ENCODE measurements at regions of chr20 and their contacts with region 1.

Region 1: DNA sequence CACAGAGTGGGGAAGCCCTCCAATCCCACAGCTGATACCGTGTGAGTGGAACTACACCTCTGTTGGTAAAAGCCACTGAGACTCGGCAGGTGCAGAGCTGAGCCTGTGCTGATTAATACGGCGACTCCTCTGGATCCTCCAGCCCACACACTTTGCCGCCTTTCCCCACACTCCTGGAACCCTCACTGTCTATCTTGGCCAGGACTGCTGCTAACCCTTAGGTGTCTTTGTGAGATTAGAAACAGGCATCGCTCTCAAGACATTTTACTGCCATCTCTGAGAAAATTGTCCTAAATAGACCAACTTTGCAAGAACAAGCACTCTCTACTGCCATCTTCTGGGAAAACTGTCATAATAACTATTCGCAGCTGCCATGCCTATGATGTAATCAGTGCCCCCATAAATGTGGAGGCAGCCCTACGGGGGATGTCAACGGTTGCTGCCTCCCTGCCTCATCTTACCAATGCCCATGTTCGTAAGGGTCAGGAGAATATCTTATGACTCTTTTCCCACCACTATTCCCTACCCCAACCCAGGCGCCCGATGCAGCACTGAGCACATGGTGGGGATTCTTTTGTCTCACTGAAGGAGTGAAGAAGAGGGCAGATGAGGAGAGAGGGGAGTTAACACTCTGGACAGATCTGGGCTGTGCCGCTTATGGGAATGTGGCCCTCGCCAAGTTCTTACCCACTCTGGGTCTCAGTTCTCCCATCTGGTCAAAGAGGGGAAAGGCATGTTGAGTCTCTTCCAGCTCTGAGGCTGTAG is 26.1 kb upstream of the KCNB1 start:
- DNase-seq: no peak
- ATAC-seq: peak; percentile 58
- H3K4me3 Mint-ChIP-seq: no peak overlapping the region
- H3K27ac Mint-ChIP-seq: no peak overlapping the region
- H3K4me1 Mint-ChIP-seq: peaks cover 7% of the 10 kb centered on the region
- H3K27me3 Mint-ChIP-seq: peaks cover 46% of the 10 kb centered on the region

Region 2: DNA sequence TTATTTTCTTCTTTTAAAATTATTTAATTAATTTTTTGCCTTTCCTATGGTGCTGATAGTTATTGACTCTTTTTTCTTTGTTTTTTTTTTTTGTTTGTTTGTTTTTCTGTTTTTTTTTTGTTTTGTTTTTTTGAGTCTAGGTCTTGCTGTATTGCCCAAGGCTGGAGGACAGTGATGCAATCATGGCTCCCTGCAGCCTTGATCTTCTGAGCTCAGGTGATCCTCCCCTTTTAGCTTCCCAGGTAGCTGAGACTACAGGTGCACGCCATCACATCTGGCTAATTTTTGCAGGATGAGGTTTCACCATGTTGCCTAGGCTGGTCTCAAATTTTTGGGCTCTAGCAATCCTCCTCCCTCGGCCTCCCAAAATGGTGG is 177.4 kb before region 1 on chr20:
- CTCF ChIA-PET with region 1: interaction called, 17 read pairs
- DNase-seq: no peak
- ATAC-seq: no peak
- H3K4me3 Mint-ChIP-seq: no peak overlapping the region
- H3K27ac Mint-ChIP-seq: no peak overlapping the region
- H3K4me1 Mint-ChIP-seq: peaks cover 3% of the 10 kb centered on the region
- H3K27me3 Mint-ChIP-seq: peaks cover 42% of the 10 kb centered on the region

Region 3: DNA sequence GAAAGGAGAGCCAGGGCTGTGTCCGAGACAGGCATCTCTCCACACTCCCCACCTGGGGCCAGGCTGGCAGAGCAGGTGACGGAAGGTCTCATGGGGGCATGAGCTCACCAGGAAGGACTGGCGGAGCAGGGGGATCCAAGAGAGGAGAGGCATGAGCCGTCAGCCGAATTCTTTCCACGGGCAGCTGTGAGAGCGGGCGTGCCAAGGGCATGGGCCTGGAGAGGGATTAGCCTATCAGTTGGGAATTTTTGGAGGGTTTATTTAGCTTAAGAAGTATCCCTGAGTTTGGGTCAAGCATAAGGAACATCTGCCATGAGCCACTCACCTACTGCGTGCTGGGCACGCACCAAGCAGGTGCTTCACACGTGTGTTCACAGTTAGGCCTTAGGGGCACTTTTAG is 170.6 kb before region 1 on chr20:
- CTCF ChIA-PET with region 1: interaction called, 17 read pairs
- DNase-seq: no peak
- ATAC-seq: no peak
- H3K4me3 Mint-ChIP-seq: no peak overlapping the region
- H3K27ac Mint-ChIP-seq: no peak overlapping the region
- H3K4me1 Mint-ChIP-seq: peaks cover 3% of the 10 kb centered on the region
- H3K27me3 Mint-ChIP-seq: peaks cover 7% of the 10 kb centered on the region

Region 4: DNA sequence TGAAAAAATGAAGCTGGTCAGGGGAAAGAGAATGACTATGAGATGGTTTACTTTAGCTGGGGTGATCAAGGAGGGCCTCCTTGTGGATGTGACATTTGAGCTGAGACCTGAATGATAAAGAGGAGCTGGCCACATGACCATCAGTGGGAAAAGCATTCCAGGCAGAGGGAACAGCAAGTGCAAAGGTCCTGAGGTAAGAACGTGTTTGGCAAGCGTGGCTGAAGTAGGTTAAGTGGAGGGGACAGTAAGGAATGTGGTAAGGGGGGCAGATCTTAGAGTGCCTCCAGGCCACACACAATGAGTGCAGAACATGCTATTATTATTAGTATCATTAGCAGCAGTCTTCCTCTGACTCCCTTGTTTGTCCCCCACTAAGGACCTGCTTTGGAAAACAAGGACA is 118.8 kb before region 1 on chr20:
- CTCF ChIA-PET with region 1: no interaction called
- DNase-seq: no peak
- ATAC-seq: no peak
- H3K4me3 Mint-ChIP-seq: no peak overlapping the region
- H3K27ac Mint-ChIP-seq: no peak overlapping the region
- H3K4me1 Mint-ChIP-seq: no peaks in the 10 kb centered on the region
- H3K27me3 Mint-ChIP-seq: peaks cover 45% of the 10 kb centered on the region

Region 5: GRCh38 chr20:49534255-49534712 is 25.7 kb after region 1 on chr20:
- CTCF ChIA-PET with region 1: interaction called, 10 read pairs
- DNase-seq: peak; percentile 84
- ATAC-seq: peak; percentile 71
- H3K4me3 Mint-ChIP-seq: peak overlapping the region; percentile 40
- H3K27ac Mint-ChIP-seq: peak overlapping the region; percentile 94
- H3K4me1 Mint-ChIP-seq: peaks cover 23% of the 10 kb centered on the region
- H3K27me3 Mint-ChIP-seq: peaks cover under 1% of the 10 kb centered on the region

Measured in activated CD8-positive, alpha-beta memory T cell treated with anti-CD3 and anti-CD28 coated beads, Interleukin-2, amount 10 ng/mL, durations not matched to agents 7 days and 5 days (primary cell).